Calu3 (cell line): ENCODE measurements at regions of chr10 and their contacts with region 1.

Region 1: GRCh38 chr10:6239213-6239991 is 36.7 kb downstream of the PFKFB3 start:
- DNase-seq: peak; percentile 80
- H3K4me3 Mint-ChIP-seq: peak overlapping the region; percentile 17
- H3K27ac Mint-ChIP-seq: peak overlapping the region; percentile 89
- H3K4me1 Mint-ChIP-seq: peaks cover 20% of the 10 kb centered on the region
- H3K27me3 Mint-ChIP-seq: no peaks in the 10 kb centered on the region
- CTCF ChIP-seq: no peak

Region 2: GRCh38 chr10:6254201-6254600 is 14.8 kb after region 1 on chr10:
- CTCF ChIA-PET with region 1: no interaction called
- intact Hi-C with region 1: no loop called
- DNase-seq: no peak
- H3K4me3 Mint-ChIP-seq: no peak overlapping the region
- H3K27ac Mint-ChIP-seq: no peak overlapping the region
- H3K4me1 Mint-ChIP-seq: peaks cover 12% of the 10 kb centered on the region
- H3K27me3 Mint-ChIP-seq: no peaks in the 10 kb centered on the region
- CTCF ChIP-seq: no peak

Region 3: DNA sequence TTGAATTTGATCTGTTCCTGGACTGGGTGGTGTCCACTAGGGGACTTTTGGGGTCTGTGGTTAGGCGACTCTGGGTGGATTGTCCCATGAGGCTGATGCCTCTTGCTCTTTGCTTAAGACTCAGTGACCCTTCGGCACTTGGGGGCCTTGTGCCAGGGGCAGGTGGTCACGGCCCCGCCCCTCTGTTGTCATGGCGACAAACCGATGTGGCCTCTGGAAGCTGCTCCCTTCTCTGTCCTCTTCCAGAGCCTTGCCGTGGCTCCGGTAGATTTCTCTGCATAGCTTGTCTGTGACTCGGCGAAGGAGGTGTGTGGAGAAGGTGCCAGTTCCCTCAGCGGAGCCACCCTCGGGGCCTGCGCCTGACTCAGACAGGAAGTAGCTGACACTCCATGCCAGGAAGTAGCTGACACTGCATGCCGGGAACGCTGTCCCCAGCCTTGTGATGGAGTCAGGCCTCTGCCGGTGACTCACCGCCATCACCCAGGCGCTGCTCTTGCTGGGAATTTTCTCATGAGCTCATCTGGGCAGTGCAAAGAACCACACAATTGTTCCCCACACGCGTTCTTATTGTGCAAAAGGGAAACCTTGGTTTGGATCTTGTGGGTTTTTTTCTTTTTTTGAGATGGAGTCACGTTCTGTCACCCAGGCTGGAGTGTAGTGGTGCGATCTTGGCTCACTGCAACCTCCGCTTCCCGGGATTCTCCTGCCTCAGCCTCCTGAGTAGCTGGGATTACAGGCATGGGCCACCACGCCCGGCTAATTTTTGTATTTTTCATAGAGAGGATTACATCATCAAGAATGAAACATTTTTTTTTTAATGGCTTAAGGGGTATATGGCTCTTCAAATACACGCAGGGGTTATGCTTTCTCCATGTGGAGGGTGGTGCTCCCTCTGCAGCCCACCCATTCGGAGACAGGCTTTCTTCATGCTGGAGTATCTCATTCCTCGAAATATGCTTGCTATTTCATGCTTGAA is 35.9 kb after region 1 on chr10:
- CTCF ChIA-PET with region 1: interaction called, 6 read pairs
- intact Hi-C with region 1: loop called (anchors 2 kb)
- DNase-seq: peak; percentile 95
- H3K4me3 Mint-ChIP-seq: peak overlapping the region; percentile 65
- H3K27ac Mint-ChIP-seq: peak overlapping the region; percentile 99
- H3K4me1 Mint-ChIP-seq: peaks cover 58% of the 10 kb centered on the region
- H3K27me3 Mint-ChIP-seq: no peaks in the 10 kb centered on the region
- CTCF ChIP-seq: no peak